ENCODE measurements at regions of chr19 and their contacts with region 1.

Region 1: DNA sequence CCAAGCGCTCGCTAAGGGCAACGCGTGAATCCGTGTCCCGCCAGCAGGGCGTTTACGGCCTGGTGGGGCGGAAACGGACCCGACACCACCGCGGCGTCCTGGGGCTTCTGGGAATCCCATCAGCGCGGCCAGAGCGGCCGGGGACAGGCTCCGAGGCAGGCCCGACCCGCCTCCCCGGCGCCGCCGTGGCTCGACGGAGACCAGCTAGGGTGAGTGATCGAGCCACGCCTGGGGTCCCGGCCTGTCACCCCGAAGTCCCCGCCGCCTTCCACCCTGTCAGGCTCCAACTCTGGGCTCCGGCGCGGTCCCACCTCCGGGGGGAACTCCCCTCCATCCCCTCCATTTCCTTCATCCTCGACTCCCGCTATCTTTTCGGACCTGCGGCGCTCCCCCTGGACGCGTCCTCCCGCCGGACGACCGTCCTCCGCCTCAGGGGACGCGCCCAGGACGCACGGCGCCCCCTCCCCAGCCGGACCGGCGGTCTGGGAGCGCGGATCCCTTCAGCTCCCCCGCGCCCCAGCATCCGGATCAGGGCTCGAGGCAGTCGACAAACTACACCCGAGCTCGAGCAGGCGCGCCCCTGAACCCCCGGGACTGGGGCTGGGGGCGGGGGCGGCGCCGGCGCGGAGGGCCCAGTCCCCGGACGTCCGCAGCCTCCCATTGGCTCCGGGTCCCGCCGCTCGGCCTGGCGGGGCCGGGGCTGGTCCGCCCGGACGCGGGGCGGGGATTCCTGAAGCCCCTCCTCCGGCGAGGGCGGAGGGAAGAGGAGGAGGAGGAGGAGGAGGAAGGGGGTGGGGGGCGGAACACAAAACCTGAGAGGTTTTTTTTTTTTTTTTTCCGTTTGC is 638 bp upstream of the BICRA start:
- DNase-seq: peak; percentile 99
- ATAC-seq: peak; percentile 90
- H3K4me3 Mint-ChIP-seq: peak overlapping the region; percentile 84
- H3K27ac Mint-ChIP-seq: peak overlapping the region; percentile 71
- H3K4me1 Mint-ChIP-seq: peaks cover 25% of the 10 kb centered on the region
- H3K27me3 Mint-ChIP-seq: no peaks in the 10 kb centered on the region
- CTCF ChIP-seq: no peak

Region 2: GRCh38 chr19:47273313-47273977 is 334.9 kb before region 1 on chr19:
- CTCF ChIA-PET with region 1: no interaction called
- POLR2A ChIA-PET with region 1: interaction called, 3 read pairs
- intact Hi-C with region 1: loop called (anchors 1 kb)
- DNase-seq: peak; percentile 83
- ATAC-seq: peak; percentile 54
- H3K4me3 Mint-ChIP-seq: peak overlapping the region; percentile 96
- H3K27ac Mint-ChIP-seq: peak overlapping the region; percentile 97
- H3K4me1 Mint-ChIP-seq: peaks cover 27% of the 10 kb centered on the region
- H3K27me3 Mint-ChIP-seq: no peaks in the 10 kb centered on the region
- CTCF ChIP-seq: no peak

Region 3: DNA sequence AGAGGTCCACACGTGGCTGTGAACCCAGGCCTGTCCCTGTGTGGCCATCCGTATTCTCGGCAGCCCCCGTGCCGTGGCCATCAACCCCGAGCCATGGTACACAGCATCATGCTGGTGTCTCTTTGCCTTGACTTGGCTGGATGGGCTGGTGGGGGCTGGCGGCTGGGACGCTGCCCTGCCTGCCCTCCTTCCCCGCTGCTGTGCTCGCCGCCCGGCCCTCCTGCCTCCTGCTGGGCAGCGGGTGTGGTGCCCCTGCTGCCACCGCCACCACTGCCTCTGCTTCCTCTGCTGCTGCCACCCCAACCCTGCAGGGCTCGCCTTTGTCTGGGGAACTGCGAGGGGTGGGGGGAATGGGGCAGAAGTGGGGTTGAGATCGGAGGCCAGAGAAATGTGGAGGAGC is 85.2 kb after region 1 on chr19:
- CTCF ChIA-PET with region 1: no interaction called
- POLR2A ChIA-PET with region 1: no interaction called
- intact Hi-C with region 1: no loop called
- DNase-seq: no peak
- ATAC-seq: no peak
- H3K4me3 Mint-ChIP-seq: no peak overlapping the region
- H3K27ac Mint-ChIP-seq: no peak overlapping the region
- H3K4me1 Mint-ChIP-seq: no peaks in the 10 kb centered on the region
- H3K27me3 Mint-ChIP-seq: no peaks in the 10 kb centered on the region
- CTCF ChIP-seq: no peak

Region 4: DNA sequence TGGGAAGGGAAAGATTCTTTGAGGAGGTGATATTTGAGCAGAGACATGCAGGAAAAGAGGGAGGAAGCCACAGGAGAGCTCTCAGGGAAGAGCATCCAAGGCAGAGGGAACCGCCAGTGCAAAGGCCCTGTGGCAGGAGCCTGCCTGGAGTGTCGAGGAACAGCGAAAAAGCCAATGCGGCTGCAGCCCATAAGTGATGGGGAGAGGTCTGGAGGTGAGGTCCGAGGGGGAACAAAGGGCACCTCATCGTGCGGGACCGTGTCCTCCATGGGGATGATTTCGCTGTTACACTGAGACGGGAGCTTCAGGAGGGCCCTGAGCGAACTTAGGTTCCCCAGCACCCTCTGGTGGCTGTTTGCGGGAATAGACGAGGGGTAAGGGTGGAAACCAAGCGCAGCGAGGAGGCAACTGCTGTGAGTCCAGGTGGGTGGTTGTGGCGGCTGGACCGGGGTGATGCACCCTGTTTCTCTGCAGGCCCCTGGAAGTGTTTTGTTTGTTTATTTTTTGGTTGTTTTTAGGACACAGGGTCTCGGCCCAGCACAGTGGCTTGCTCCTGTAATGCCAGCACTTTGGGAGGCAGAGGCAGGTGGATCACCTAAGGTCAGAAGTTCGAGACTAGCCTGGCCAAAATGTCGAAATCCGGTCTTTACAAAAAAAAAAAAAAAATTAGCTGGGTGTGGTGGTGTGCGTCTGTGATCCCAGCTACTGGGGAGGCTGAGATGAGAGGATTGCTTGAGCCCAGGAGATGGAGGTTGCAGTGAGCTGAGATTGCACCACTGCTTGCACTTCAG is 99.0 kb after region 1 on chr19:
- CTCF ChIA-PET with region 1: no interaction called
- POLR2A ChIA-PET with region 1: no interaction called
- intact Hi-C with region 1: no loop called
- DNase-seq: peak; percentile 56
- ATAC-seq: peak; percentile 77
- H3K4me3 Mint-ChIP-seq: no peak overlapping the region
- H3K27ac Mint-ChIP-seq: no peak overlapping the region
- H3K4me1 Mint-ChIP-seq: no peaks in the 10 kb centered on the region
- H3K27me3 Mint-ChIP-seq: peaks cover 16% of the 10 kb centered on the region
- CTCF ChIP-seq: no peak

Measured in activated B cell treated with CpG ODN at 0.5 μM for 24 hours (primary cell).